Activated naive CD8-positive, alpha-beta T cell treated with anti-CD3 and anti-CD28 coated beads, Interleukin-2, amount 10 ng/mL, durations not matched to agents 7 days and 5 days (primary cell): ENCODE measurements at regions of chr17 and their contacts with region 1.

Region 1: GRCh38 chr17:7484067-7484918 is at the start of gene POLR2A:
- DNase-seq: peak; percentile 99
- ATAC-seq: peak; percentile 69
- H3K4me3 Mint-ChIP-seq: peak within 1 kb of the TSS; percentile 94
- H3K27ac Mint-ChIP-seq: peak within 1 kb of the TSS; percentile 99
- H3K4me1 Mint-ChIP-seq: peaks cover 47% of the 10 kb centered on the region
- H3K27me3 Mint-ChIP-seq: no peaks in the 10 kb centered on the region
- total RNA-seq, gene POLR2A: 192 to 214 TPM

Region 2: DNA sequence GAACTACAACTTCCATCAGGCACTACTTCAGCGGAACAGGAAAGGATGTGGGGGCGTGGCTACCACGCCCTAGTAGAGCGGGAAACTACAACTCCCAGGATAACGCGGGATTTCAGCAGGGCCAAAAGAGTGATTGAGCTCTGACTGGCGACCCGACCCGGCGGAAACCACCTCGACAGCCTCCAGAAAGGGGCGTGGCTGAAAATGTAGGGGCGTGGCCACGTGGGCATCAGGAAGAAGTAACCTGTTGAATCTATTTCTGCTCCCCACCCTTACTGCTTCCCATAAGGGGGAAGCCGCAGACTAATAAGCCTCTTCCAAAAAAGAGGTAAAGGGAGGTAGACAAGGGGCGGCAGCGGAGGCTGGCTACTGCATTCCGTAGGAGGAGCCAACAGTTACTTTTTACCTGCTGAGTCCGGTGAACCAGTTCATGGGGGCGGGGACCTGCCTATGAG is 49.0 kb before region 1 on chr17 and contains the start of gene TMEM102:
- POLR2A ChIA-PET with region 1: interaction called, 66 read pairs
- DNase-seq: peak; percentile 98
- ATAC-seq: peak; percentile 65
- H3K4me3 Mint-ChIP-seq: peak within 1 kb of the TSS; percentile 96
- H3K27ac Mint-ChIP-seq: peak within 1 kb of the TSS; percentile 96
- H3K4me1 Mint-ChIP-seq: peaks cover 18% of the 10 kb centered on the region
- H3K27me3 Mint-ChIP-seq: no peaks in the 10 kb centered on the region
- total RNA-seq, gene TMEM102: 15.7 to 17.7 TPM

Region 3: GRCh38 chr17:7454980-7455379 is 29.3 kb before region 1 on chr17:
- POLR2A ChIA-PET with region 1: interaction called, 94 read pairs
- DNase-seq: no peak
- ATAC-seq: no peak
- H3K4me3 Mint-ChIP-seq: peak overlapping the region; percentile 90
- H3K27ac Mint-ChIP-seq: peak overlapping the region; percentile 94
- H3K4me1 Mint-ChIP-seq: peaks cover 30% of the 10 kb centered on the region
- H3K27me3 Mint-ChIP-seq: no peaks in the 10 kb centered on the region

Region 4: DNA sequence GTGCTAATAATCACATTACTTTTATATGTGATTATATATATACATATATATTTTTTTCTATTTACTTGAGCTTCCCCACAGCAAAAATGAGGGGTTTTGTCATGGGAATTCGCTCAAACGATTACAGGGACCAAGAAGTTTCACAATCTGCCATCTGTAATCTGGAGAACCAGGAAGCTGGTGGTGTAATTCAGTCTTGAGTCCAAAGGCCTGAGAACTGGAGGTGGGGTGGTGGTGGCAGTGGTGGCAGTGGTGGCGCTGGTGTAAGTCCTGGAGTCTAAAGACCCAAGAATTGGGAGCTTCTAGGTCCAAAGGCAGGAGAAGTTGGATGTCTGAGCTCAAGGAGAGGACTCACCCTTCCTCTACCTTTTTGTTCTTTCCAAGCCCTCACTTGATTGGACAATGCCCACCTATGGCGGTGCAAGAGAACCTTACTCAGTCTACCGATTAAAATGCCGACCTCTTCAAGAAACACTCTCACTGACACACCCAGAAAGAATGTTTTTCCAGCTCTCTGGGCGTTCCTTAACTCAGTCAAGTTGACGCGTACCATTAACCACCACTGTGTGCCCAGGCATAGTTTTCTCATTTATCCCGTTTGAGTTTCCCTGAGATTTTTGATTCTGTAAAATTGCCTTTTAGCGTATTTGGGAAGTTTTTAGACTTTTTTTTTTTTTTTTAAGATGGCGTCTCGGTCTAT is 31.8 kb after region 1 on chr17:
- POLR2A ChIA-PET with region 1: interaction called, 12 read pairs
- DNase-seq: no peak
- ATAC-seq: no peak
- H3K4me3 Mint-ChIP-seq: no peak overlapping the region
- H3K27ac Mint-ChIP-seq: no peak overlapping the region
- H3K4me1 Mint-ChIP-seq: peaks cover 8% of the 10 kb centered on the region
- H3K27me3 Mint-ChIP-seq: no peaks in the 10 kb centered on the region

Region 5: GRCh38 chr17:7561028-7561575 is 76.8 kb after region 1 on chr17:
- POLR2A ChIA-PET with region 1: interaction called, 10 read pairs
- DNase-seq: peak; percentile 85
- ATAC-seq: peak; percentile 54
- H3K4me3 Mint-ChIP-seq: peak overlapping the region; percentile 83
- H3K27ac Mint-ChIP-seq: peak overlapping the region; percentile 87
- H3K4me1 Mint-ChIP-seq: peaks cover 55% of the 10 kb centered on the region
- H3K27me3 Mint-ChIP-seq: no peaks in the 10 kb centered on the region

Region 6: DNA sequence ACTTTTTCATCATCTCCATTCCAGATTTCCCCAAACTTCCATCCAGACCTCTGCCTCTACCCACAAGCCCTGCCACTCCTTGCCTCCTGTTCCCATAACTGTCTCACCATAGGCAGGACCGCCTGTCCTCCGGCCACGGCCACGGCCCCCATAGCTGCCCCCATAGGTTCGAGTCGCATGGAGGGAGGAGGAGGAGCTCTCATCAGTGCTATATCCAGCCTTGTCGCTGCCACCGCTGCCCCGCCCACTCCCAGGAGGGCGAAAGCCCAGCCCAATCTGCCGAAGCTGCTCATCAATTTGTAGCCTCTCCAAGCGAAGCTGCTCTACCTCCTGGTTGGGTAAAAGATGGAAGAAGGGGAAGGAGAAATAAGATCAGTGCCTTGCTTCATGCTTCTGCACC is 109.0 kb after region 1 on chr17:
- POLR2A ChIA-PET with region 1: no interaction called
- DNase-seq: no peak
- ATAC-seq: no peak
- H3K4me3 Mint-ChIP-seq: no peak overlapping the region
- H3K27ac Mint-ChIP-seq: no peak overlapping the region
- H3K4me1 Mint-ChIP-seq: no peaks in the 10 kb centered on the region
- H3K27me3 Mint-ChIP-seq: no peaks in the 10 kb centered on the region